ENCODE measurements at regions of chr18 and their contacts with region 1.

Region 1: GRCh38 chr18:21191596-21192307 is 50.3 kb upstream of the GREB1L start:
- DNase-seq: peak; percentile 65
- ATAC-seq: peak; percentile 84
- H3K4me3 ChIP-seq: no peak overlapping the region
- H3K27ac ChIP-seq: no peak overlapping the region
- H3K4me1 ChIP-seq: peaks cover 10% of the 10 kb centered on the region
- H3K27me3 ChIP-seq: no peaks in the 10 kb centered on the region
- CTCF ChIP-seq: peak; percentile 81

Region 2: GRCh38 chr18:21031845-21032244 is 159.9 kb before region 1 on chr18:
- CTCF ChIA-PET with region 1: no interaction called
- POLR2A ChIA-PET with region 1: no interaction called
- intact Hi-C with region 1: no loop called
- DNase-seq: no peak
- ATAC-seq: no peak
- H3K4me3 ChIP-seq: no peak overlapping the region
- H3K27ac ChIP-seq: no peak overlapping the region
- H3K4me1 ChIP-seq: no peaks in the 10 kb centered on the region
- H3K27me3 ChIP-seq: no peaks in the 10 kb centered on the region
- CTCF ChIP-seq: no peak

Region 3: GRCh38 chr18:21242141-21242779 is 50.5 kb after region 1 on chr18 and contains the start of gene GREB1L:
- CTCF ChIA-PET with region 1: no interaction called
- POLR2A ChIA-PET with region 1: no interaction called
- intact Hi-C with region 1: loop called (anchors 2 kb)
- DNase-seq: peak; percentile 85
- ATAC-seq: peak; percentile 89
- H3K4me3 ChIP-seq: peak within 1 kb of the TSS; percentile 87
- H3K27ac ChIP-seq: peak within 1 kb of the TSS; percentile 44
- H3K4me1 ChIP-seq: peaks cover 16% of the 10 kb centered on the region
- H3K27me3 ChIP-seq: no peaks in the 10 kb centered on the region
- CTCF ChIP-seq: no peak; the same call in 1 of the 2 replicates
- total RNA-seq, gene GREB1L: 6.3 and 10.3 TPM in 2 replicates

Region 4: DNA sequence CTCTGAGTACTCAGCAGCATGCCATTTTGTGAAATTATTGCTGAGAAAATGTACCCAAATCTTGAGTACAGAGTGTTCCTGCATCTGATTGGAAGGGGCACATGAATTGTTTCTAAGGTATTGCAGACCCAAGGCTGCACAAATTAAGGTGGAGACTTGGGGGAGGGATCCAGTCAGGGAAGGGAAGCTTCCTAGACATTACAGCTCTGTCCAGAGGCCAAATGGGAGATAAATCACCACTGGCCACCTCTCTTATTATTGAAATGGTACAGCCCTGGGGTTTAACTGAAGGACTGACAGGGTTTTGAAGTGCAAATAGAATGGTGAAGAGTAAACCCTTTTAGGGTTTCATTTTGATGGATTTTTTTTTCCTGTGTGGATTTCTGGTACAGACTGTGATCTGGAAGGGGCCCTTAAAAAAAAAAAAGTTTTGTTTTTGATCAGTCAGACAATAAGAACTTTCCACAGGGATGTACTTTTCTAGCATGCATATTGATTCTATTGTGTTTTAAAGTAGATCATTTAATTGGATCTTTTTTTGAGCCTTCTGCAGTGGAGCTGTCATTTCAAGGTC is 169.6 kb after region 1 on chr18:
- CTCF ChIA-PET with region 1: no interaction called
- POLR2A ChIA-PET with region 1: no interaction called
- intact Hi-C with region 1: loop called (anchors 10 kb)
- DNase-seq: no peak
- ATAC-seq: no peak
- H3K4me3 ChIP-seq: no peak overlapping the region
- H3K27ac ChIP-seq: no peak overlapping the region
- H3K4me1 ChIP-seq: 0 out of 2 replicates have a peak, but pooled peaks cover 4% of the 10 kb centered on the region
- H3K27me3 ChIP-seq: no peaks in the 10 kb centered on the region
- CTCF ChIP-seq: no peak

Region 5: DNA sequence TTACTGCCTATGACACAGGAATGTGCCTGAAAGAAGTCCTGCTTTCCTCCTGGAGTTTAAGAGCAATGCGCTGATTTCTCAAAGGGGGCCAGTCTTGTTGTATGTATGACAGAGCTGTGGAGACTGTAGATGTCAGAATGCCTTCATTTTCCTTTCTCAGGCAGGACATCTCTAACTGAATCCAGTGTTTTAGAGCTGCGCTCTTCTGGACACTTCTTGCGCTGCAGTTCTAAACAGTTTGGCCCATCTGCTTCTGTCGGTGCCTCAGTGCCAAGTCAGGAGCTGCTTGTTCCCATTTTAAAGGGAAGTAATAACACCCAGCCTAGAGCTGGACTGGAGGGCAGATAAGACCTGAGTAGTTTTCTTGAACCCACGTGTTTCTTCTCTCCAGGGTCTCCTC is 317.3 kb after region 1 on chr18:
- CTCF ChIA-PET with region 1: interaction called, 3 read pairs
- POLR2A ChIA-PET with region 1: no interaction called
- intact Hi-C with region 1: loop called (anchors 1 kb)
- DNase-seq: no peak
- ATAC-seq: peak; percentile 38; the same call in 1 of the 2 replicates
- H3K4me3 ChIP-seq: no peak overlapping the region
- H3K27ac ChIP-seq: no peak overlapping the region
- H3K4me1 ChIP-seq: no peaks in the 10 kb centered on the region
- H3K27me3 ChIP-seq: no peaks in the 10 kb centered on the region
- CTCF ChIP-seq: no peak